A549 (cell line): ENCODE measurements at regions of chr16 and their contacts with region 1.

Region 1: DNA sequence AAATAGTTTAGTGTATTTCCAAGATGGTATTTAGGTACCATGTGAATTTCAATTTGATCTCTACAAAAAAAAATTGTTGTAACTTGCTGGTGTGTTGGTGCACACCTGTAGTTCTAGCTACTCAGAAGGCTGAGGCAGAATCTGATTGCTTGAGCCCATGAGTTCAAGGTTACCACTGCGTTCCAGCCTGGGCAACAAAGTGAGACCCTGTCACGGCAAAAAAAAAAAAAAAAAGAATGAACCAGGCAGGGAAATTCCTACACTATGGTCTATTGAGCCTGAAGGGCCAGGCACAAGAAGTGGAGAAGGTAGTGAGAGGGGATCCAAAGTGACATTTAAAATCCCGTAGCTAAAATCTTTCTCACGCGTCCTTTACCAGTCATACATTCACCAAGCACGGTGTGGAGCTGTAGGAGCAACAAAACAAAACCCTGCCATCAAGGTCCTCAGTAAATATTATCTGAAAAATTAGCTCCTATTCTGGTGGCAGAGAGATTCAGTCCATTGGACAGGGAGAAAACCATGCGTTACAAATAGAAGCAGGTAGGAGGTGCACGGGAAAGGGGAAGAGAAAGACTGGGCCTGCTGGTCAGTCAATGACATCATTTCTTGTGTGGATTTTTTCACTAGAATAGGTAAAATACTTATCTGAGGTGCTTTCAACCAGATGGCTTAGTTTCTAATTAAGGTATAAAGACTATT is 27.3 kb downstream of the TXNDC11 start:
- DNase-seq: no peak
- ATAC-seq: no peak
- H3K4me3 ChIP-seq: no peak overlapping the region
- H3K27ac ChIP-seq: no peak overlapping the region; a peak in 2 of 6 replicates
- H3K4me1 ChIP-seq: peaks cover 21% of the 10 kb centered on the region
- CTCF ChIP-seq: no peak
- EP300 ChIP-seq: no peak
- POLR2A ChIP-seq: no peak
- RAD21 ChIP-seq: no peak

Region 2: DNA sequence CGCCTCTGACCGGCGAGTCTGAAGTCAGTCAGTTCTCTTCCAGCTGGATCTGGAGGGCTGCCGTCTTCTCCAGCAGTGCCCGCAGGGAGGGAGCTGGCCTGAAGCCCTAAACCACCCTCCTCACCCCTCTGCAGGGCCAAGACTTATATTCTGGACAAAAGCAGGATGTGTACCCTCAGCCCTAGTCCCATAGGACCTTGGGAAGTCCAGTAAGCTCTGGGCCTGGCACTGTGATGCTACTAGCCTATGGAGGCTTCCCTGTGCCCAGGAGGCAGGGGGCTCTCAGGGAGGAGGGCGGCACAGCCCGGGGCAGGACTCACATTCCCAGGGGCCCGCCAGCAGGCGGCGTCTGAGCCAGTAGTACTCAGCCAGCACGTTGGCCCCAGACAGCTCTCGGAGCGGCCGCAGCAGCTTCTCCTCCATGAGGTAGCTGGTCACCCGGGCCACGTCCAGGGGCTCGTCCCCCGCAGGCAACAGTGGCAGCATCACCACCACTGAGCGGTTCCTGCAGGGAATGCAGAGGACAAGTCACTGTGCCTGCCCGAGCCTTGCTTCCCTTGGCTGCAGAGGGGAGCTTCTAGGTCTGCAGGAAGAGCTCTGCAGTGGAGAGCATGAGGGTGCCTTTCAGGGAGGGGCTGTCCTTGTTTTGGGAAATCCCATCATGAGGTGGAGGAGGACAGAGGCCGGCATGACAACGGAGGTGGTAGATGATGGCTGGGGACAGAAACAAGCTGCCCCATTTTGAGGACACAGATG is 328.4 kb before region 1 on chr16:
- CTCF ChIA-PET with region 1: interaction called, 344 read pairs
- POLR2A ChIA-PET with region 1: no interaction called
- DNase-seq: peak; percentile 30 to 60
- ATAC-seq: peak; percentile 70 to 91; a peak in 5 of 6 replicates
- H3K4me3 ChIP-seq: no peak overlapping the region
- H3K27ac ChIP-seq: 0 out of 6 replicates have a peak overlapping the region, but pooled peaks of 1 of the 2 experiments have one; percentile 19
- H3K4me1 ChIP-seq: no peaks in the 10 kb centered on the region
- CTCF ChIP-seq: peak; percentile 45
- EP300 ChIP-seq: no peak
- POLR2A ChIP-seq: no peak
- RAD21 ChIP-seq: peak; percentile 32 to 33; a peak in 2 of 5 replicates

Region 3: GRCh38 chr16:11639925-11640899 is 75.2 kb before region 1 on chr16:
- CTCF ChIA-PET with region 1: interaction called, 13 read pairs
- POLR2A ChIA-PET with region 1: no interaction called
- DNase-seq: peak; percentile 94 to 100
- ATAC-seq: peak; percentile 91 to 94
- H3K4me3 ChIP-seq: peak overlapping the region; percentile 32
- H3K27ac ChIP-seq: peak overlapping the region; percentile 99 to 100
- H3K4me1 ChIP-seq: peaks cover 57% of the 10 kb centered on the region
- CTCF ChIP-seq: no peak; the same call in 2 of the 3 replicates
- EP300 ChIP-seq: peak; percentile 97 to 98; a peak in 4 of 5 replicates
- POLR2A ChIP-seq: peak; percentile 43
- RAD21 ChIP-seq: peak; percentile 12 to 67; a peak in 4 of 5 replicates

Region 4: GRCh38 chr16:11682655-11683096 is 32.7 kb before region 1 on chr16:
- CTCF ChIA-PET with region 1: interaction called, 18 read pairs
- POLR2A ChIA-PET with region 1: no interaction called
- DNase-seq: no peak
- ATAC-seq: no peak; a peak in 1 of 6 replicates
- H3K4me3 ChIP-seq: no peak overlapping the region
- H3K27ac ChIP-seq: no peak overlapping the region
- H3K4me1 ChIP-seq: peaks cover 23% of the 10 kb centered on the region
- CTCF ChIP-seq: no peak
- EP300 ChIP-seq: no peak
- POLR2A ChIP-seq: no peak
- RAD21 ChIP-seq: no peak

Region 5: GRCh38 chr16:11698271-11698689 is 17.1 kb before region 1 on chr16:
- CTCF ChIA-PET with region 1: interaction called, 22 read pairs
- POLR2A ChIA-PET with region 1: no interaction called
- DNase-seq: no peak
- ATAC-seq: peak in 1 of 2 experiments; percentile 54; a peak in 3 of 6 replicates
- H3K4me3 ChIP-seq: no peak overlapping the region
- H3K27ac ChIP-seq: peak overlapping the region; percentile 19 to 27; a peak in 1 of 6 replicates
- H3K4me1 ChIP-seq: peaks cover 27% of the 10 kb centered on the region
- CTCF ChIP-seq: peak; percentile 18; the same call in 2 of the 3 replicates
- EP300 ChIP-seq: no peak
- POLR2A ChIP-seq: no peak
- RAD21 ChIP-seq: no peak

Region 6: DNA sequence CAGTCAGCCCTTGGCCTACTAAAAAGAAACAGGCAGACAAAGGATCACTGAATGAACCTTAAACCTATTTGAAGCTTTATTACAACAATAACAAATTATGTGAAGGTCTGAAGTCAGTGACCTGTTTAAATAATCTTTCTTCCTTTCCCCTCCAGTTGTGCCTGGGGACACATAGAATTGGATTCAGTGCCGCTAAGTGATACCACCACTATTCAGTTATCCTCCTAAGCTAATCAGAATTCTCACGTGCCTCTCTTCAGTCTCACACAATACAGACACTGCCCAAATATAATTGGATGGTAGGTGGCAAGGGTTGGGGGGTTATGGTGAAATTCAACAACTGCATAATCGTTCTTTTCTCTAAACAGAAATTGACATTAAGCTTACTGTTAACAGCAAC is 15.8 kb after region 1 on chr16:
- CTCF ChIA-PET with region 1: interaction called, 16 read pairs
- POLR2A ChIA-PET with region 1: no interaction called
- DNase-seq: no peak
- ATAC-seq: no peak
- H3K4me3 ChIP-seq: no peak overlapping the region
- H3K27ac ChIP-seq: no peak overlapping the region
- H3K4me1 ChIP-seq: peaks cover 4% of the 10 kb centered on the region; the same call in 2 of the 3 replicates
- CTCF ChIP-seq: no peak
- EP300 ChIP-seq: no peak
- POLR2A ChIP-seq: no peak
- RAD21 ChIP-seq: no peak

Region 7: DNA sequence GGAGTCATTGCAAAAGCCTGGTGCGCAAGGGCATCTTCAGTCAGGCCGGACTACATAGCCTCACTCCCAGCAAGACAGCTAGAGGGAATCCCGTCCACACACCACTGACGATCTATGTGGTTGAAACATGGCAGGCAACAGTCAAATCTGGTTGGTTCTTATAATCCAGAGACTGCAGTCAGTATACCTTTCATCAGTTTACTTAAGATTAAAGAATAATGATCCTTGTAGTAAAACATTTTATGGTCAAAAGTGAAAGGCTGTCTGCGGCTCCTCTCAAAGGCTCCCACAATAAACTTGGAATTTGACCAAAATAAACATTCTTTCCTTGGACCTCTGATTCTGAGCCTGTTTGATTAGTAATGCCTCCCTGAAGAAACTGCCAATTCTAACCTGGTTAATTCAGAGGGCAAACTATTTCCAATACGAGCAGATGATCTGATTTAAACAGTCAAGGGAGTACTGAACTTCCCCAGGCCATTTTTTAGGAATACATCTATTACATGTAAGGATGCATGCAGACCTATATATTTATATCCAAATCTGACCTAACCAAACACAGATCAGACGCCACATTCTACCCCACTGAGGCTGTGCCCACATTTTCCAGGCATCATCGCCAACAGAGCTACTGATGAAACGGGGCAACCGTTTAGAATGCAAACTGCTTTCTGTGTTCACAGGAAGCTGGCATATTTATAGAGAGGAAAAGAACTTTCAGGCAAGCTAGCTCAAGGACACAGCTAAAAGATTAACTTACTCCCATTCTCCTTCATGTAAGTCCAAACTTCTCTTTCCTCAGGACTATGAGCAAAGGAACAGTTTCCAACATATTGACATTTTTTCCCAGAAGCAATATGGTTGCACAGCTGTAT is 42.5 kb after region 1 on chr16:
- CTCF ChIA-PET with region 1: no interaction called
- POLR2A ChIA-PET with region 1: no interaction called
- DNase-seq: peak; percentile 19 to 66
- ATAC-seq: peak; percentile 84 to 86
- H3K4me3 ChIP-seq: no peak overlapping the region
- H3K27ac ChIP-seq: peak overlapping the region; percentile 34 to 38; a peak in 3 of 6 replicates
- H3K4me1 ChIP-seq: peaks cover 52% of the 10 kb centered on the region
- CTCF ChIP-seq: no peak
- EP300 ChIP-seq: no peak
- POLR2A ChIP-seq: no peak
- RAD21 ChIP-seq: no peak

Region 8: GRCh38 chr16:11783319-11784037 is 68.1 kb after region 1 on chr16:
- CTCF ChIA-PET with region 1: no interaction called
- POLR2A ChIA-PET with region 1: no interaction called
- DNase-seq: no peak
- ATAC-seq: peak in 1 of 2 experiments; percentile 40; a peak in 3 of 6 replicates
- H3K4me3 ChIP-seq: no peak overlapping the region
- H3K27ac ChIP-seq: peak overlapping the region; percentile 27 to 54; a peak in 3 of 6 replicates
- H3K4me1 ChIP-seq: peaks cover 19% of the 10 kb centered on the region
- CTCF ChIP-seq: no peak
- EP300 ChIP-seq: no peak
- POLR2A ChIP-seq: no peak
- RAD21 ChIP-seq: no peak

Region 9: DNA sequence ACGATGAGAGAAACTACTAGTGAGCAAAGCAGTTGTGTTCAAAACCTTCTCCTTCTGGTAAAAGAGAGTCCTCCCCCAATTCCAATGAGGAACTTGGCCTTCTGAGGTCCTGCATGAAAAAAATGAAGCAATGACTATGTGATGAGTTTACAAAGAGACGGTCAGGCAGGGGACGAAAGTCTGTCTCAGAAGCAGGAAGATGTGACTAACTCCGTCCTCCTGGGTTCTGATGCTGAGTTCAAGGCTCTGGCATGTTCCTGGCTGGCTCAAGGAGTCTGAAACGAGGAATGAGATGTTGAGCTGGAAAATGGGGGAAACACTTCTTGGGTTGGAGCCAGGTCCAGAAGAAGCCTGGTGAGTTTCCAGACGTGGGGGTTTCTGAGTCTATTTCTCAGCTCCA is 958.7 kb after region 1 on chr16:
- CTCF ChIA-PET with region 1: no interaction called
- POLR2A ChIA-PET with region 1: no interaction called
- DNase-seq: peak in 1 of 2 experiments; percentile 9
- ATAC-seq: no peak
- H3K4me3 ChIP-seq: no peak overlapping the region
- H3K27ac ChIP-seq: no peak overlapping the region
- H3K4me1 ChIP-seq: peaks cover 10% of the 10 kb centered on the region; the same call in 2 of the 3 replicates
- CTCF ChIP-seq: no peak
- EP300 ChIP-seq: no peak
- POLR2A ChIP-seq: no peak
- RAD21 ChIP-seq: no peak